ENCODE measurements at regions of chr17 and their contacts with region 1.

Region 1: DNA sequence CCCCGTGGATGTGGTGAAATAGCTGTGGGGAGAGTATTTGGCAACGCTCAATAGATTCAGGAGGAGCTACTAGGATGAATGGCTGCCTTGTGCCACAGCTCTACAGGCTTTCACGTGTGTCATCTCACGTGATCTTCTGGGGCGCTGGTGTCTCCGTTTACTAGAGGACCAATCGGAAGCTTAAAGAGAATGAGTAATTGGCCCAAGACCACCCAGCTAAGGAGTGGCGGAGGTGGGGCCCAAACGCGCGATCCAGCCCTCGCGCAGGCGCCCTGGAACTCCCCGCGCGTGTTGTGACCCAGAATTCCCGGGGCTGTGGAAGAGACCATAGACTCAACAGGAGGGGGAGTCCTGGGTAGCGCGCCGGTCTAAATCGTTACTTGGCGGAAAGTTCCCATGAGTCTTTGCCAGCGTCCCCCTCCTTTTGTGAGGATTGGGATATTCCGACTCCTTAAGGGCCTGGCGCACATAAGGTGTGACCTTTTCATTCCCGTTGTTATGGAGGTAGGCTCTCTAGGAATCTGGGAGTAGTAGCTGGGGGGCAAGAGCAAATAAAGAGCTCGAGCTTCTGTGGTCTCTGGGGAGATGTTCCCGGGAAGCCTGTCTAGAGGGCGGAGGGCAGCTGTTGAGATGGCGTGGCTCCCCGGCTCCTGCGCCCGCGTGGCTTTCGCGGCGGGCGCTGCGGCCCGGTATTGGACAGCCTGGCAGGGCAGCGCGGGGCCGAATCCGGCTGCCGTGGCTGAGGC is 23.4 kb downstream of the TRPV2 start:
- DNase-seq: peak; percentile 86 to 99 (median 92)
- ATAC-seq: peak; percentile 81
- H3K4me3 ChIP-seq: peak overlapping the region; percentile 96
- H3K4me3 Mint-ChIP-seq: peak overlapping the region; percentile 100
- H3K27ac ChIP-seq: peak overlapping the region; percentile 81 to 91
- H3K27ac Mint-ChIP-seq: peak overlapping the region; percentile 96
- H3K4me1 ChIP-seq: peaks cover 55% of the 10 kb centered on the region
- H3K4me1 Mint-ChIP-seq: peaks cover 56% of the 10 kb centered on the region
- H3K27me3 ChIP-seq: no peaks in the 10 kb centered on the region
- H3K27me3 Mint-ChIP-seq: no peaks in the 10 kb centered on the region
- CTCF ChIP-seq: no peak

Region 2: GRCh38 chr17:16285957-16286640 is 152.6 kb before region 1 on chr17:
- CTCF ChIA-PET with region 1: interaction called, 4 read pairs
- POLR2A ChIA-PET with region 1: interaction called, 4 read pairs
- intact Hi-C with region 1: loop called in 1 of 2 experiments (anchors 1 kb)
- DNase-seq: peak; percentile 53 to 93 (median 68)
- ATAC-seq: peak; percentile 93
- H3K4me3 ChIP-seq: peak overlapping the region; percentile 11
- H3K4me3 Mint-ChIP-seq: peak overlapping the region; percentile 85
- H3K27ac ChIP-seq: peak overlapping the region; percentile 79 to 81
- H3K27ac Mint-ChIP-seq: peak overlapping the region; percentile 100
- H3K4me1 ChIP-seq: peaks cover 54% of the 10 kb centered on the region
- H3K4me1 Mint-ChIP-seq: peaks cover 62% of the 10 kb centered on the region
- H3K27me3 ChIP-seq: no peaks in the 10 kb centered on the region
- H3K27me3 Mint-ChIP-seq: no peaks in the 10 kb centered on the region
- CTCF ChIP-seq: peak; percentile 35

Region 3: DNA sequence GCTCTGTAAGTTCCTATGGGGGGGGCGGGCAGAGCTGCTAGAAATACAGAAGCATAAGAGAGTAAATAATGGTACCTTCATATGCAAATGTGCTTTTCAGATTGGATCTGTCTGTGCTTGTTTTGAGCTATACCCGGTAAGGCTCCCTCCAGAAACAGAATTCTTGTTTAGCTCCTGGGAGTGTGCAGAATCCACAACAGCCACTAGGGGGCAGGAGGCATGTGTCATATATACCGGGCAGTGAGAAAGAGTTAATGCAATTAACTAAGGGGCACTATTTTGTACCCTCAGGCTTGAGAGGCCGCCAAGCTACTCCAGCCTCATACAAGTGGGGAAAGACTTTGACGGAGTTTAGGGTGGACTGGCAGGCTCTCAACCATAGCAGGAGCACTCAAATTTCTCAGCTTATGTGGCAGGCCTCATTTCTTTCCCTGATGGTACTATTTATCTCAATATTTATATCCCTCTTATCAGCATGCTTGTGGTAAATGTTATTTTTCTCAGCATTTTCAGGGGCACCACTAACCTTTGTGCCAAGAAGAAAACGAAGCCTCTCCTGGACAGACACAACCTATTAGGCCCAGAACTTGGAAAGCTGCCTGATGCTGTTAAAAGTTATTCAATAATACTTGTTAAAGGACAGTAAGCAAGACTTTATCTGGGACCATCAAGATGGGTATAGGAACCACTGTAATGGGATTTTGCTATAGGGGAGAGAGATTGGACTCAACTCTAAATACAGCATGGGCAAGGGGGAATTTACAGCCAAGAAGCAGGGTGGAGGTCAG is 74.8 kb before region 1 on chr17:
- CTCF ChIA-PET with region 1: interaction called, 18 read pairs
- POLR2A ChIA-PET with region 1: interaction called, 8 read pairs
- intact Hi-C with region 1: no loop called
- DNase-seq: peak; percentile 57 to 85 (median 66)
- ATAC-seq: peak; percentile 98
- H3K4me3 ChIP-seq: no peak overlapping the region
- H3K4me3 Mint-ChIP-seq: no peak overlapping the region
- H3K27ac ChIP-seq: no peak overlapping the region
- H3K27ac Mint-ChIP-seq: no peak overlapping the region
- H3K4me1 ChIP-seq: peaks cover 4% of the 10 kb centered on the region
- H3K4me1 Mint-ChIP-seq: no peaks in the 10 kb centered on the region
- H3K27me3 ChIP-seq: no peaks in the 10 kb centered on the region
- H3K27me3 Mint-ChIP-seq: no peaks in the 10 kb centered on the region
- CTCF ChIP-seq: peak; percentile 98

Region 4: DNA sequence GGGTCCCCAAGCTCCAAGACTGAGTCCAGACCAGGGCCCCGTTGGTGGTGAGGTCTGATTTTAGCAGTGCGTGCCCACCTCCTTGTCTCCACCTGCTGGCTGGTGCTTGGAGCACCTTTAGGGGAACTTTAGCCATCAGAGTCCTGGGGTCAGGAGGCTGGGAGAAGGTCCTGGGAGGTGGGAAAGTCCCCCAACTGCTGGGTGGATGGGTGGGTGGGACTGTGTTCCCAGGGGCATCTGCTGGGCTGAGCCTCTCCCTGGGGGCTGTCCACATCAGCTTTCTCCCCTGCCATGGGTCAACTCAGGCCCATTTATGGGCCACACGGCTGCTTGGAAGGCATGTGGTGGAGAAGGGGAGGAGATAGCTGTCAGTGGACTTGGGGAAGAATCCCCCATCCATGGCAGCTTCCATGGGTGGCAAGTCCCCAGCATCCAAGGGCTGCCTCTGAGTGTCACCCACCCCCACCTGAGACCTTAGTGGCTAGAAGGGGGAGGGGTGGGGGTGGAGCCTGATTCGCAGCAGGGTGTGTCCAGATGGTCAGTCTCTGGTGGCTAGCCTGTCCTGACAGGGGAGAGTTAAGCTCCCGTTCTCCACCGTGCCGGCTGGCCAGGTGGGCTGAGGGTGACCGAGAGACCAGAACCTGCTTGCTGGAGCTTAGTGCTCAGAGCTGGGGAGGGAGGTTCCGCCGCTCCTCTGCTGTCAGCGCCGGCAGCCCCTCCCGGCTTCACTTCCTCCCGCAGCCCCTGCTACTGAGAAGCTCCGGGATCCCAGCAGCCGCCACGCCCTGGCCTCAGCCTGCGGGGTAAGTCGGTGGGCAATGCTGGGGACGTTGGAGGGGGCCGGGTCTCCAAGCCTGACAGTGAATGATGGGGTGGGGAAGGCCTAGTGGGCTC is 23.5 kb before region 1 on chr17 and contains the start of gene TRPV2:
- CTCF ChIA-PET with region 1: no interaction called
- POLR2A ChIA-PET with region 1: interaction called, 49 read pairs
- intact Hi-C with region 1: loop called (anchors 1 to 2 kb)
- DNase-seq: peak; percentile 21 to 72 (median 45)
- ATAC-seq: peak; percentile 49
- H3K4me3 ChIP-seq: peak within 1 kb of the TSS; percentile 96
- H3K4me3 Mint-ChIP-seq: peak within 1 kb of the TSS; percentile 95
- H3K27ac ChIP-seq: peak within 1 kb of the TSS; percentile 90 to 96
- H3K27ac Mint-ChIP-seq: peak within 1 kb of the TSS; percentile 100
- H3K4me1 ChIP-seq: peaks cover 56% of the 10 kb centered on the region
- H3K4me1 Mint-ChIP-seq: peaks cover 47% of the 10 kb centered on the region
- H3K27me3 ChIP-seq: no peaks in the 10 kb centered on the region
- H3K27me3 Mint-ChIP-seq: no peaks in the 10 kb centered on the region
- CTCF ChIP-seq: peak; percentile 55
- total RNA-seq, gene TRPV2: 42.8 to 45.2 TPM

Region 5: GRCh38 chr17:16453493-16453851 is 14.7 kb after region 1 on chr17:
- CTCF ChIA-PET with region 1: interaction called, 13 read pairs
- POLR2A ChIA-PET with region 1: interaction called, 6 read pairs
- intact Hi-C with region 1: loop called in 1 of 2 experiments (anchors 2 kb)
- DNase-seq: no peak
- ATAC-seq: no peak
- H3K4me3 ChIP-seq: no peak overlapping the region
- H3K4me3 Mint-ChIP-seq: no peak overlapping the region
- H3K27ac ChIP-seq: no peak overlapping the region
- H3K27ac Mint-ChIP-seq: peak overlapping the region; percentile 50
- H3K4me1 ChIP-seq: peaks cover 8% of the 10 kb centered on the region
- H3K4me1 Mint-ChIP-seq: peaks cover 14% of the 10 kb centered on the region
- H3K27me3 ChIP-seq: no peaks in the 10 kb centered on the region
- H3K27me3 Mint-ChIP-seq: no peaks in the 10 kb centered on the region
- CTCF ChIP-seq: no peak

Region 6: GRCh38 chr17:16537130-16537458 is 98.4 kb after region 1 on chr17:
- CTCF ChIA-PET with region 1: no interaction called
- POLR2A ChIA-PET with region 1: interaction called, 20 read pairs
- intact Hi-C with region 1: loop called in 1 of 2 experiments (anchors 5 kb)
- DNase-seq: peak in 1 of 14 experiments; percentile 21
- ATAC-seq: no peak
- H3K4me3 ChIP-seq: no peak overlapping the region
- H3K4me3 Mint-ChIP-seq: peak overlapping the region; percentile 93
- H3K27ac ChIP-seq: no peak overlapping the region
- H3K27ac Mint-ChIP-seq: peak overlapping the region; percentile 81
- H3K4me1 ChIP-seq: peaks cover 19% of the 10 kb centered on the region
- H3K4me1 Mint-ChIP-seq: peaks cover 13% of the 10 kb centered on the region
- H3K27me3 ChIP-seq: no peaks in the 10 kb centered on the region
- H3K27me3 Mint-ChIP-seq: no peaks in the 10 kb centered on the region
- CTCF ChIP-seq: no peak

Region 7: GRCh38 chr17:16639438-16639837 is 200.7 kb after region 1 on chr17:
- CTCF ChIA-PET with region 1: no interaction called
- POLR2A ChIA-PET with region 1: no interaction called
- intact Hi-C with region 1: no loop called
- DNase-seq: no peak
- ATAC-seq: no peak
- H3K4me3 ChIP-seq: no peak overlapping the region
- H3K4me3 Mint-ChIP-seq: no peak overlapping the region
- H3K27ac ChIP-seq: no peak overlapping the region
- H3K27ac Mint-ChIP-seq: no peak overlapping the region
- H3K4me1 ChIP-seq: no peaks in the 10 kb centered on the region
- H3K4me1 Mint-ChIP-seq: no peaks in the 10 kb centered on the region
- H3K27me3 ChIP-seq: no peaks in the 10 kb centered on the region
- H3K27me3 Mint-ChIP-seq: no peaks in the 10 kb centered on the region
- CTCF ChIP-seq: no peak

Region 8: GRCh38 chr17:18314731-18315561 is 1876.2 kb after region 1 on chr17 and contains the starts of genes SMCR8 and TOP3A:
- CTCF ChIA-PET with region 1: no interaction called
- POLR2A ChIA-PET with region 1: no interaction called
- intact Hi-C with region 1: loop called in 1 of 2 experiments (anchors 5 kb)
- DNase-seq: peak; percentile 94 to 99 (median 97)
- ATAC-seq: peak; percentile 95
- H3K4me3 ChIP-seq: peak within 1 kb of the TSS; percentile 86
- H3K4me3 Mint-ChIP-seq: peak within 1 kb of the TSS; percentile 93
- H3K27ac ChIP-seq: peak within 1 kb of the TSS; percentile 96 to 98
- H3K27ac Mint-ChIP-seq: peak within 1 kb of the TSS; percentile 84
- H3K4me1 ChIP-seq: peaks cover 74% of the 10 kb centered on the region
- H3K4me1 Mint-ChIP-seq: peaks cover 85% of the 10 kb centered on the region
- H3K27me3 ChIP-seq: no peaks in the 10 kb centered on the region
- H3K27me3 Mint-ChIP-seq: no peaks in the 10 kb centered on the region
- CTCF ChIP-seq: no peak
- total RNA-seq, gene SMCR8: 52.2 to 54.5 TPM
- total RNA-seq, gene TOP3A: 21.5 to 24.8 TPM

Measured in CD4-positive, alpha-beta T cell (primary cell).